GM12878 (cell line): ENCODE measurements at regions of chr1 and their contacts with region 1.

Region 1: GRCh38 chr1:41919764-41920397 is 1.2 kb upstream of the HIVEP3 start:
- DNase-seq: peak; percentile 55
- ATAC-seq: peak; percentile 98
- H3K4me3 ChIP-seq: peak overlapping the region; percentile 55
- H3K27ac ChIP-seq: peak overlapping the region; percentile 62
- H3K4me1 ChIP-seq: peaks cover 17% of the 10 kb centered on the region
- H3K27me3 ChIP-seq: no peaks in the 10 kb centered on the region; a peak in 1 of 4 replicates
- CTCF ChIP-seq: no peak
- EP300 ChIP-seq: no peak
- POLR2A ChIP-seq: peak; percentile 80
- RAD21 ChIP-seq: no peak

Region 2: GRCh38 chr1:41754540-41754939 is 165.3 kb before region 1 on chr1:
- CTCF ChIA-PET with region 1: no interaction called
- POLR2A ChIA-PET with region 1: no interaction called
- RAD21 ChIA-PET with region 1: no interaction called
- SMC1A ChIA-PET with region 1: no interaction called
- in situ Hi-C with region 1: no loop called
- intact Hi-C with region 1: no loop called
- DNase-seq: no peak
- ATAC-seq: 0 out of 3 replicates have a peak, but pooled peaks have one; percentile 3
- H3K4me3 ChIP-seq: no peak overlapping the region
- H3K27ac ChIP-seq: no peak overlapping the region
- H3K4me1 ChIP-seq: peaks cover 48% of the 10 kb centered on the region
- H3K27me3 ChIP-seq: no peaks in the 10 kb centered on the region
- CTCF ChIP-seq: peak; percentile 39 to 45 (median 40); a peak in 5 of 6 replicates
- EP300 ChIP-seq: no peak
- POLR2A ChIP-seq: no peak
- RAD21 ChIP-seq: peak; percentile 57

Region 3: DNA sequence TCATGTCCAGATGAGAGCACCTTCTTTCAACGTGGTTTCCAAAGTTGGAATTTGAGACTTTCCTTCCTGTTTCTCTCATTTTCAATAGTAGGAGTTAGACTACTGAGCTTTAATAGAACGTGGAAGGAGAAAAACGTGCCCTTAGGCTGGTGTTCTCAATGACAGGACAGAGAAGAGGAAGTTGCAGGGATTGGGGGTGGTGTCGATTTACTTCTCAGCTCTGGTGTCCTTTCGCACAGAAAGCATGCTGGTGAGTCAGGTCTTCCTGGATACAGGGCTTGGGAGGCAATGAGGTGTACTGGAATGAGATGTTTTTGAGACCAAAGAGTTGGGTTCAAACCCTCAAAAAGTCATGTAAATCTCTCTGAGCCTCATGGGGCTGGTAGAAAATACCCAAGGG is 68.3 kb before region 1 on chr1:
- CTCF ChIA-PET with region 1: no interaction called
- POLR2A ChIA-PET with region 1: no interaction called
- RAD21 ChIA-PET with region 1: no interaction called
- SMC1A ChIA-PET with region 1: no interaction called
- in situ Hi-C with region 1: no loop called
- intact Hi-C with region 1: no loop called
- DNase-seq: no peak
- ATAC-seq: no peak
- H3K4me3 ChIP-seq: no peak overlapping the region
- H3K27ac ChIP-seq: no peak overlapping the region
- H3K4me1 ChIP-seq: no peaks in the 10 kb centered on the region; the same call in 1 of the 2 replicates
- H3K27me3 ChIP-seq: no peaks in the 10 kb centered on the region
- CTCF ChIP-seq: no peak
- EP300 ChIP-seq: no peak
- POLR2A ChIP-seq: no peak
- RAD21 ChIP-seq: no peak

Region 4: DNA sequence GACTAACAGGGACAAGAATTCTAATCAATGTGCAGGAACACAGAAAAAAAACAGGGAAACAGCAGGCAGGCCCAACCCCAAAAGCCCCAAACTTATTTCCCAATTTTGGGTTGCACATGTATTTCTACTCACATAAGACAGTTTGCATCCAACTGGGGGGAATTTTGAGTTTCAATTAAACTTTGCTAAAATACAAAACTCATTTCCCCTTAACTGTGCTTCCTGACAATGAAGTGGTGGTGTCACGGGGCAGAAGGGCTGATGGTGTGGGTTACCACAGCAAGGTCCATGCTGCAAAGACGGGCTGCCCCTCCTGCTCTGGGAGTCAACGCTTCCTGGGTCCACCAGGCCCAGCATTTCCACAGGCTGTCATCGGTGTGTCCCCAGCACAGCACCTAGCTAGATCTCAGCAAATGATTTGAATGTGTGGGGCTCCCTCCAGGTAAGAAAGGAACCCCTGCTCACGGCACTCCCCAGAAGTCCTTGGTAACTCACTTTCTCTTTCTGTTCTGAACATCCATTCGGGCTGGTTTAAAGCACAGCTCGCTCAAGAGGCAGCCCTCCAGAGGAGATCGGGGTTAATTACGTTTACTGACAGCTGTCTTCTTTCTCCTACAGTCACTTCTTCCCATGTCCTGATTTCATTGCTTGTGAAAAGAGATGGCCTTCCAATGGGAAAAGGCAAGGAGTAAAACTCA is 28.5 kb before region 1 on chr1:
- CTCF ChIA-PET with region 1: interaction called, 11 read pairs
- POLR2A ChIA-PET with region 1: interaction called, 3 read pairs
- RAD21 ChIA-PET with region 1: interaction called, 13 read pairs
- SMC1A ChIA-PET with region 1: interaction called, 7 read pairs
- in situ Hi-C with region 1: no loop called
- intact Hi-C with region 1: no loop called
- DNase-seq: peak; percentile 68
- ATAC-seq: peak; percentile 98
- H3K4me3 ChIP-seq: peak overlapping the region; percentile 66
- H3K27ac ChIP-seq: peak overlapping the region; percentile 75
- H3K4me1 ChIP-seq: peaks cover 15% of the 10 kb centered on the region
- H3K27me3 ChIP-seq: no peaks in the 10 kb centered on the region
- CTCF ChIP-seq: peak; percentile 39 to 42 (median 41); a peak in 5 of 6 replicates
- EP300 ChIP-seq: peak; percentile 4 to 26; a peak in 1 of 4 replicates
- POLR2A ChIP-seq: peak; percentile 73
- RAD21 ChIP-seq: peak; percentile 72

Region 5: GRCh38 chr1:41907446-41907845 is 12.4 kb before region 1 on chr1:
- CTCF ChIA-PET with region 1: interaction called, 9 read pairs
- POLR2A ChIA-PET with region 1: interaction called, 6 read pairs
- RAD21 ChIA-PET with region 1: interaction called, 4 read pairs
- SMC1A ChIA-PET with region 1: interaction called, 14 read pairs
- in situ Hi-C with region 1: no loop called
- intact Hi-C with region 1: no loop called
- DNase-seq: no peak
- ATAC-seq: no peak
- H3K4me3 ChIP-seq: no peak overlapping the region
- H3K27ac ChIP-seq: no peak overlapping the region
- H3K4me1 ChIP-seq: peaks cover 17% of the 10 kb centered on the region
- H3K27me3 ChIP-seq: no peaks in the 10 kb centered on the region
- CTCF ChIP-seq: no peak
- EP300 ChIP-seq: no peak
- POLR2A ChIP-seq: no peak
- RAD21 ChIP-seq: no peak

Region 6: GRCh38 chr1:41980827-41981653 is 61.2 kb after region 1 on chr1:
- CTCF ChIA-PET with region 1: no interaction called
- POLR2A ChIA-PET with region 1: no interaction called
- RAD21 ChIA-PET with region 1: interaction called, 3 read pairs
- SMC1A ChIA-PET with region 1: no interaction called
- in situ Hi-C with region 1: no loop called
- intact Hi-C with region 1: loop called (anchors 1 kb)
- DNase-seq: no peak
- ATAC-seq: no peak
- H3K4me3 ChIP-seq: no peak overlapping the region
- H3K27ac ChIP-seq: no peak overlapping the region
- H3K4me1 ChIP-seq: peaks cover 10% of the 10 kb centered on the region
- H3K27me3 ChIP-seq: no peaks in the 10 kb centered on the region
- CTCF ChIP-seq: no peak
- EP300 ChIP-seq: no peak
- POLR2A ChIP-seq: no peak
- RAD21 ChIP-seq: no peak

Region 7: GRCh38 chr1:42035830-42036604 is 116.1 kb after region 1 on chr1:
- CTCF ChIA-PET with region 1: interaction called, 3 read pairs
- POLR2A ChIA-PET with region 1: interaction called, 3 read pairs
- RAD21 ChIA-PET with region 1: interaction called, 6 read pairs
- SMC1A ChIA-PET with region 1: interaction called, 4 read pairs
- in situ Hi-C with region 1: no loop called
- intact Hi-C with region 1: loop called (anchors 10 kb)
- DNase-seq: peak; percentile 55
- ATAC-seq: peak; percentile 90
- H3K4me3 ChIP-seq: peak overlapping the region; percentile 93
- H3K27ac ChIP-seq: peak overlapping the region; percentile 37; the same call in 1 of the 2 replicates
- H3K4me1 ChIP-seq: peaks cover 8% of the 10 kb centered on the region; the same call in 1 of the 2 replicates
- H3K27me3 ChIP-seq: no peaks in the 10 kb centered on the region; a peak in 1 of 4 replicates
- CTCF ChIP-seq: no peak
- EP300 ChIP-seq: no peak
- POLR2A ChIP-seq: peak; percentile 63; the same call in 1 of the 2 replicates
- RAD21 ChIP-seq: no peak